ENCODE measurements at regions of chr3 and their contacts with region 1.

Region 1: DNA sequence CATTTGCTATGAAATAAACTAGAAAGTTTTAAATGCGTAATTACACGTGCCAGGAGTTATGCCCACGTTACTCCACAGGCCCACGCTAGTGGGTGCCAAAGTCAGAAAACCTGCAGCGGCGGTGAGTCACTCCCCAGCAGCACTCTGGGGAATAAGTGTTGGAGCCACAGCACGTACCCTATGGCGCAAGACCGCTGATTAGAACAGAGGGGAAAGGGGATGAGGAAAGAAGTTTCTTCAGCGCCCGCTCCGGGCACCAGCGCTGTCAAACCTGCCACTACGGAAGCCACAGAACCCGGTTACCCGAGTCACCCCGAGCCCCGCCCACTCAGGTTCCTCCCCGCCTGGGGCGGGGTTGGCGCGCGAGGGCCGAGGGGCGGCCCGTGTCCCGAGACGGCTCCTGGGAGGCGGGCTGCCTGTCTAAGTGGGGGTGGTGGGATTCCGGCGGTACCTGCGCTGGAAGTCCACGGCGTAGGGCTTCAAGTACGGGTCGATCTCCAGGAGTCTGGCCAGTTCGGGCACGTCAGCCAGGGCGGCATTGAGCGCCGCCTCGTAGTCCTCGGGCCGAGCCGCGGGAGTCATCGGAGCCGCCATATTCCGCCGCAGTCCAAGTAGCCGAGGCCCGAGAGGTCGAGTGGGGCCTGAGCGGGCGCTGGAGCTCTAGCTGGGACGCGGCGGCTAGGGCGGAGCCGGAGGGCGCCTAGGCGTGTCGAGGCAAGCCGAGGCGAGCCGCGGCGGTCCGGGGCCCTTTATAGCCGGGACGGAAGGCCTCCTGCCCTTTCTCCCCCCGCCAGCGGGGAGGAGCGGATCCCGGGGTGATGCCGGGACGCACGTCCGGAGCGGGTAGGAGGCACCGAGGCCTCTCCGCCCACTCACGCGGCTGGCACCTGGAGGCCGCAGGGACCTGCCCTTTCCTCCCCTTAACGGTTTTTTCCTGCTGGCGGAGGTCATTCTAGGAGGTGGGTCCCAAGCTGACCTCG is at the start of gene GBE1:
- DNase-seq: peak; percentile 81 to 85 (median 84)
- ATAC-seq: peak; percentile 96
- H3K4me3 ChIP-seq: peak within 1 kb of the TSS; percentile 72
- H3K27ac ChIP-seq: peak within 1 kb of the TSS; percentile 99
- H3K4me1 ChIP-seq: peaks cover 3 to 12% of the 10 kb centered on the region in 2 experiments; a peak in 3 of 5 replicates
- H3K27me3 ChIP-seq: no peaks in the 10 kb centered on the region
- CTCF ChIP-seq: peak in 2 of 3 experiments; percentile 37 to 39; a peak in 2 of 6 replicates
- EP300 ChIP-seq: peak; percentile 72
- POLR2A ChIP-seq: peak; percentile 93
- RAD21 ChIP-seq: 0 out of 4 replicates have a peak, but pooled peaks of 1 of the 2 experiments have one; percentile 5
- polyA plus RNA-seq, gene GBE1: 7.9 to 9.2 TPM

Region 2: DNA sequence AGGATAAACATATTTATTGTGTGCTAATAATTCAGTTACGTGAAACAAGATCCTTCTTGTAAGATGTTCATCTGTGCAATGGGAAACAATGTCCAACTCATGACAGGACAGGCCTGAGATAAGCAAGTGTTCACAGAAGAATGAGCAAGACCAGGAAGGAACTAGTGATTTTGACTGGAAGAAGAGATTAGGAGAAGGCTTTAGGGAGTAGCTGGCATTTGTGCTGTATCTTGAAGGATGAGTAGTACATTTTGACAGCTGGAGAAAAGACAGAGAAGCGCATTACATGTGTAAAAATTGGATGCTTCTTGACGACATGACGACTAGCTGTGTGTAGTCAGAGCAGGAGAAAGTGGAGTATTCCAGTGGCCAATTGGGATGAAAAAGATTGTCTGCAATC is 48.2 kb before region 1 on chr3:
- CTCF ChIA-PET with region 1: no interaction called
- POLR2A ChIA-PET with region 1: interaction called, 3 read pairs
- in situ Hi-C with region 1: no loop called
- intact Hi-C with region 1: loop called (anchors 5 kb)
- DNase-seq: peak in 2 of 4 experiments; percentile 16 to 68
- ATAC-seq: peak; percentile 73
- H3K4me3 ChIP-seq: no peak overlapping the region
- H3K27ac ChIP-seq: 0 out of 3 replicates have a peak overlapping the region, but pooled peaks have one; percentile 50
- H3K4me1 ChIP-seq: peaks cover 0 to 3% of the 10 kb centered on the region in 2 experiments; a peak in 2 of 5 replicates
- H3K27me3 ChIP-seq: no peaks in the 10 kb centered on the region
- CTCF ChIP-seq: no peak
- EP300 ChIP-seq: peak; percentile 66; the same call in 1 of the 2 replicates
- POLR2A ChIP-seq: no peak
- RAD21 ChIP-seq: no peak

Measured in K562 (cell line).